IMR-90 (cell line): ENCODE measurements at regions of chr20 and their contacts with region 1.

Region 1: GRCh38 chr20:38073307-38074071 is 39.9 kb downstream of the RPRD1B start:
- DNase-seq: peak; percentile 98
- ATAC-seq: peak; percentile 87
- H3K4me3 ChIP-seq: no peak overlapping the region
- H3K27ac ChIP-seq: peak overlapping the region; percentile 89
- H3K4me1 ChIP-seq: peaks cover 21% of the 10 kb centered on the region
- H3K27me3 ChIP-seq: no peaks in the 10 kb centered on the region
- CTCF ChIP-seq: peak; percentile 89
- POLR2A ChIP-seq: no peak
- RAD21 ChIP-seq: peak; percentile 75

Region 2: DNA sequence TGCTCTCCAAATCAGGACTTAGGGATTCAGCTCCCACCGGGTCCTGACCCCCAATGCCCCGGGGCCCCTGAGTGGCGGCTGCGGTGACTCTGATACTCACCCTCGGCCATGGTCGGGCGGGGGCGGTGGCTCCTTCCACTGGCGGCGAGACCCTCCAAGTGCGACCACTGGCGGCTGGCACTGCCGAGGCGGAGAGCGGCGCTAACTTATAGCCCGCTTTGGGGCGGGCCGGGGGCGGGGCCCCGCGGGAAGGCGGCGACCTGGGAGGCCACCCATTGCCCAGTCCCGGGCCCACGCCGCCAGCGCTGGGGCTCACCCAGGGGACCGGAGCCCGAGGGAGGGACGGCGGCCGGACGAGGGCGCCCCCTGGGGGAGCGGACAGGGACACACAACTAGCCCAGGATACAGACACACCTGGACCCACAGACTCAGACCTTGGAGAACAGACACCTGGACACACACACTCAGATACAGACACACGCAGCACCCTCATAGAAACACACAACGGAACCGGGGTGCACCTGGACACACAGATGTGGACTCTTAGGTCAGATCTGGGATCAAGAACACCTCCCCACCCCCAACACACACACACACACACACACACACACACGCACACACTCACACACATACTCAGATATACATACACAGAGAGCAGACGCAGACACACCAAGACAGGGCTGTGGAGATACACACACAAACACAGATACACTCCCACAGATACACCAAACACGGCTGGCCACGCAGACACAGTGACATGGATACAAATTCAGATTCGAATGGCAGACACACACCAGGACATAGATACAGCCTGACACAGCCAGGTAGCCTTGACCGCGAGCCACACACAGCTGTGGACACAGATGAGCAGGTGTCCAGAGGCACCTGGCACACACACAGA is 91.8 kb after region 1 on chr20 and contains the start of gene TGM2:
- CTCF ChIA-PET with region 1: interaction called, 5 read pairs
- POLR2A ChIA-PET with region 1: no interaction called
- dilution Hi-C with region 1: no loop called
- in situ Hi-C with region 1: loop called (anchors 5 kb)
- intact Hi-C with region 1: loop called (anchors 1 kb)
- DNase-seq: peak; percentile 69
- ATAC-seq: peak; percentile 79
- H3K4me3 ChIP-seq: peak within 1 kb of the TSS; percentile 50
- H3K27ac ChIP-seq: peak within 1 kb of the TSS; percentile 53
- H3K4me1 ChIP-seq: peaks cover 48% of the 10 kb centered on the region
- H3K27me3 ChIP-seq: no peaks in the 10 kb centered on the region
- CTCF ChIP-seq: peak; percentile 81
- POLR2A ChIP-seq: no peak
- RAD21 ChIP-seq: peak; percentile 87
- total RNA-seq, gene TGM2: 237 and 268 TPM in 2 replicates

Region 3: GRCh38 chr20:38173237-38174156 is 100.0 kb after region 1 on chr20:
- CTCF ChIA-PET with region 1: interaction called, 4 read pairs
- POLR2A ChIA-PET with region 1: no interaction called
- dilution Hi-C with region 1: no loop called
- in situ Hi-C with region 1: loop called (anchors 5 kb)
- intact Hi-C with region 1: loop called (anchors 2 kb)
- DNase-seq: peak; percentile 92
- ATAC-seq: peak; percentile 85
- H3K4me3 ChIP-seq: no peak overlapping the region
- H3K27ac ChIP-seq: peak overlapping the region; percentile 8; the same call in 1 of the 2 replicates
- H3K4me1 ChIP-seq: peaks cover 30% of the 10 kb centered on the region
- H3K27me3 ChIP-seq: no peaks in the 10 kb centered on the region
- CTCF ChIP-seq: 0 out of 2 replicates have a peak, but pooled peaks have one; percentile 15
- POLR2A ChIP-seq: peak; percentile 52; the same call in 1 of the 2 replicates
- RAD21 ChIP-seq: peak; percentile 31; the same call in 1 of the 2 replicates

Region 4: DNA sequence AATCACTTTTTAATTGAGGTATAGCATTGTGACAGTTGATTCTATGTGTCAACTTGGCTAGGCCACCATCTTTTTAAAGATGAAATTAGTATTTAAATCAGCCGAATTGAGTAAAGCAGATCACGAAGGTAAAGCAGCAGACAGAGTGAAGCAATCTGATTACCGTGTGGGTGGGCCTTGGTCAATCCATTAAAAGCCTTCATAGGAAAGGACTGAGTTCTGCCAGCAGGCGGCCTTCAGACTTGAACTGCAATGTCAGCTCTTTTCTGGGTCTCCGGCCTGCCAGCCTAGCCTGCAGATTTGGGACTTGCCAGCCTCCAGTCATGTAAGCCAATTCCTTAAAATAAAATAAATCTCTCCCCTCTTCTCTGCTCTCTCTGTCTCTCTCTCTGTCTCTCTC is 114.0 kb after region 1 on chr20:
- CTCF ChIA-PET with region 1: no interaction called
- POLR2A ChIA-PET with region 1: no interaction called
- dilution Hi-C with region 1: no loop called
- in situ Hi-C with region 1: no loop called
- intact Hi-C with region 1: no loop called
- DNase-seq: peak; percentile 43
- ATAC-seq: peak; percentile 48
- H3K4me3 ChIP-seq: no peak overlapping the region
- H3K27ac ChIP-seq: no peak overlapping the region
- H3K4me1 ChIP-seq: peaks cover 11% of the 10 kb centered on the region
- H3K27me3 ChIP-seq: no peaks in the 10 kb centered on the region
- CTCF ChIP-seq: 0 out of 2 replicates have a peak, but pooled peaks have one; percentile 14
- POLR2A ChIP-seq: no peak
- RAD21 ChIP-seq: 0 out of 2 replicates have a peak, but pooled peaks have one; percentile 19